ENCODE measurements at regions of chr10 and their contacts with region 1.

Region 1: DNA sequence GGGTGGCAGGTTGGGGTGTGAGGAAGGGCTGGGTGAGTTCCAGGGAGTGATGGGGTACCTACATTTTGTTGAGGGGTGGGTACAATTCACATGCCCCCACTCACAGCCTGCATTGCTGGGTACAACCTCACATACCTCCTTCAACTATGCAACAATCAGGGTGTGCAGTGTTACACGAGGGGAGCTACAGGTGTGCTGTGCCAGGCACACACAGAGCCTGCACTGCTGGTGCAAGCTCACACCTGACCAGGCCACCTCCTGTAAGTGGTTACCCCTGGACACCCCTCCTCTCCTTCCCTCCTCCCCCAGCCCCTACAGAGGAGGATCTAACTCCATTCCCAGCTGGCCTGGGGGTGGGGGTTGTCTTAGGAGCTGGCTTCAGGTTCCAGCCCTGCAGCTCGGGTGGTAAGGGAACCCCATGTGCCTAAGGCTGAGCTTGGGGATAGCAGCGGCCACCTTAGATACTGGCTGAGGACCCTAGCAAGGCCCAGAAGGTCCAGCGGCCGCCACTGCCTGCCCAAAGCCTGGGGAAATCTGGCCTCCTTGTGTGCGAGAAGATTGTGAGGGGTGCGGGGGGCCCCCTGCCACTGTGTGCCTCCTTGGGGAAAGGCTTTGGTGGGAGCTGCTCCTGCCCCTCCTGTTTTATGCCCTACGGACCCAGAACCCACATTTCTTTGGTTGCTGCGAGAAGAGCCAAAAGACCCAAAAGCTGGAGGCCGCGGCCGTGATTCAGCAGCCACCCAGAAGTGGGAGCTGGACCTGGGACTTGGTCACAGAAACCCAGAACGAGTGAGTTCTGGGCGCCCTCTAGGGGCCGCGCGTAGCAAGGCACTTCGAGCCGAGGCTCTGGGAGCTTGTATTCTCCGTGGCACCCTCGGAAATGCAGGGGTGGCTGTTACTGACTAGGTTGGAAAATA is 10.8 kb downstream of the TLX1 start:
- DNase-seq: peak; percentile 79
- H3K4me3 Mint-ChIP-seq: no peak overlapping the region
- H3K27ac Mint-ChIP-seq: no peak overlapping the region
- H3K4me1 Mint-ChIP-seq: peaks cover 13% of the 10 kb centered on the region
- H3K27me3 Mint-ChIP-seq: peaks cover 95% of the 10 kb centered on the region

Region 2: GRCh38 chr10:100890673-100891317 is 251.1 kb before region 1 on chr10:
- CTCF ChIA-PET with region 1: no interaction called
- POLR2A ChIA-PET with region 1: no interaction called
- DNase-seq: peak; percentile 3
- H3K4me3 Mint-ChIP-seq: no peak overlapping the region
- H3K27ac Mint-ChIP-seq: no peak overlapping the region
- H3K4me1 Mint-ChIP-seq: no peaks in the 10 kb centered on the region
- H3K27me3 Mint-ChIP-seq: peaks cover 40% of the 10 kb centered on the region

Region 3: DNA sequence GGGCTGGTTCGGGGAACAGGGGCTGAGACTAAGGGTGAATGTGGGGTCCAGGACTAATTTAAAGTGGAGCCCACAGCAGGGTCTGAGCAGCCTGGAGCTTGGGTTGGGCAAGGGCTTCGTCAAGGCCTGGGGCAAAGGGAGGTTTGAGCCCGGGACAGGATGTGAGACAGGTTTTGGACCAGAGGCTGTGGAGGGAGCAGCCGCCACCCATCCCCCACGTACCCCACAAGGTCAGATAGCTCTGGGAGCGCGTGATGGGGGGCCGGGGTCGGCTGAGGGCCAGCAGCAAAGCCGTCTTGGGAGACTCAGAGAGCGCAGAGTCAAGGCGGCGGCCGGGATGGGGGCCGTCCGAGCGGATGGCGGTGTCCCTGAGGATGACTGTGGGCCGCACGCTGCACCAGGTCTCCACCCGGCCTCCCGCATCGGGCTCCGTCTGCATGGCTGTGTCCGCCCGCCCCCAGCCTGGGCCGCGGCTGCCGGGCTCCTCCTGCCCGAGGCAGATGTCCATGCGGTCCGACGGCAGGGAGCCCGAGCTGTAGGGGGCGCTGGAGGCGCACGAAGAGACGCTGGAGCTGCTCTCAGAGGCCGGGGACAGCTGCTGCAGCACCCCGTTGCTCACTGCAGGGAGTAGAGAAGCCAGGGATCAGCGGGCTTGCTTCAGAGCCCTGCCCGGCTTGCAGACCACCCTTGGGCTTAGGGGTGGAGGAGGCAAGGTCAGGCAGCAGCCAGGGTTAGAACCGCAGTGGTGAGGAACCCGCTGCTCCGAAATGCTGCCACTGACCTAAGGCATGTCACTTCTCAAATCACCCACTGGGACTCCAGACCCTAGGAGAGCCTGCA is 123.1 kb before region 1 on chr10:
- CTCF ChIA-PET with region 1: interaction called, 15 read pairs
- POLR2A ChIA-PET with region 1: no interaction called
- DNase-seq: peak; percentile 84
- H3K4me3 Mint-ChIP-seq: no peak overlapping the region
- H3K27ac Mint-ChIP-seq: no peak overlapping the region
- H3K4me1 Mint-ChIP-seq: peaks cover 13% of the 10 kb centered on the region
- H3K27me3 Mint-ChIP-seq: peaks cover 37% of the 10 kb centered on the region

Region 4: DNA sequence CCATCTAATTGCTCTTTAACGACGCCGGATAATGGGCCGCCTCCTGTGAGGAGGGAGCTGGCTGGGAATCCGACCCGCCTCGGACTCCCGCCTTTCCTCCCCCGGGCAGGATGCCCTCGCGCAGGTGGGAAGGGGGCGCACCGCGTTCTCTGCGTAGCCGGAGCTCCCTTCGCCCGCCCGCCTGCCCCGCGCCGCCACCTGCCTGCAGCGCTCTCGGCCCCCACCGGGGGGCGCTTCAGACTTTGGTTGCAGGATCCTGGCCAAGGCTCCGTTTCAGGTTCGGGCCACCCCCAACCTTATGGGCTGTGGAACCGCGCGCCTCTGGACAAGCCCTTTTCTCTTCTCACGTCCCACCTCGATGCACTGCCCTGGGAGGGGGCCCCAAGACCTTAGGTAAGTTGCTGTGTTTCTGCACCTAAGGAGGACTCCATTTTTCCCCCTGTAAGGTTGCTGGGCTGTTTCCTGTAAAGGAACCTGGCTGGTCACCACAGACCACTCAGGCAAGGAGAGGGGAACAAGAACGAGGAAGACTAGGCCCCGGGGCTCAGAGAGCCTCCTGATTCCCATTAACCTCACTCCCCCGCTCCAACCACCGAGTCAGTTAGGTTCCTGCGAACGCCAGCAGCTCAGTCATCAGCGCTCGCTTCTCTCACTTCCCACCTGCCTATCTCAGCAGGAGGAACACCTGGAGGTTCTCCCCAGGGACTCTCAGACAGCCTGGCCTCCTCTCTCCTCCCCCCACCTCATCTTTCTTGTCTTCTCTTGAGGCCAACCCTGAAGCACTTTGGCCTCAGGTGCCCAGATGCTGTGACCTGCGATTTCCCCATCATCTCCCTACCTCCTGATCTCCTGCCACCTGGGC is 91.4 kb before region 1 on chr10:
- CTCF ChIA-PET with region 1: interaction called, 37 read pairs
- POLR2A ChIA-PET with region 1: no interaction called
- DNase-seq: peak; percentile 83
- H3K4me3 Mint-ChIP-seq: no peak overlapping the region
- H3K27ac Mint-ChIP-seq: no peak overlapping the region
- H3K4me1 Mint-ChIP-seq: peaks cover 32% of the 10 kb centered on the region
- H3K27me3 Mint-ChIP-seq: peaks cover 41% of the 10 kb centered on the region

Region 5: GRCh38 chr10:101067356-101068083 is 74.4 kb before region 1 on chr10:
- CTCF ChIA-PET with region 1: interaction called, 10 read pairs
- POLR2A ChIA-PET with region 1: no interaction called
- DNase-seq: peak; percentile 82
- H3K4me3 Mint-ChIP-seq: peak overlapping the region; percentile 77
- H3K27ac Mint-ChIP-seq: no peak overlapping the region
- H3K4me1 Mint-ChIP-seq: peaks cover 24% of the 10 kb centered on the region
- H3K27me3 Mint-ChIP-seq: peaks cover 51% of the 10 kb centered on the region

Region 6: DNA sequence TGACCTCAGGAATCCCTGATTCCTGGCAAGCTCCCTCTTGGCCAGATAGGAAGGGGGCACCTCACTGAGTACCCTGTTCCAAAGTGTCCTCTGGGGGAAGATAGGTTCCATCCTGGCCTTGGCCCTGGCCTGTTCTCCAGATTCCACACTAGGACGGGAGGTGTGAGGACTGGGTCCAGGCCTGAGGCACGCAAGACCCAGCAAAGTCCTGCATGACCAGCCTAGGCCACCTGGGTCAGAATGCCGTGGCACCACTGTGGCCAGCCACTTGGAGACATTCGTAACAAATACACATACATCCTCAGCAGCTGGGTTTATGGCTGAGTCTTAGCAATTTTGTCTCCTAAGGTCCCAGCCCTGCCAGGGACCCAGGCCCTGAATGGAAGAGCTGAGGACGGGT is 34.1 kb before region 1 on chr10:
- CTCF ChIA-PET with region 1: interaction called, 307 read pairs
- POLR2A ChIA-PET with region 1: no interaction called
- DNase-seq: no peak
- H3K4me3 Mint-ChIP-seq: no peak overlapping the region
- H3K27ac Mint-ChIP-seq: no peak overlapping the region
- H3K4me1 Mint-ChIP-seq: no peaks in the 10 kb centered on the region
- H3K27me3 Mint-ChIP-seq: peaks cover 33% of the 10 kb centered on the region

Region 7: DNA sequence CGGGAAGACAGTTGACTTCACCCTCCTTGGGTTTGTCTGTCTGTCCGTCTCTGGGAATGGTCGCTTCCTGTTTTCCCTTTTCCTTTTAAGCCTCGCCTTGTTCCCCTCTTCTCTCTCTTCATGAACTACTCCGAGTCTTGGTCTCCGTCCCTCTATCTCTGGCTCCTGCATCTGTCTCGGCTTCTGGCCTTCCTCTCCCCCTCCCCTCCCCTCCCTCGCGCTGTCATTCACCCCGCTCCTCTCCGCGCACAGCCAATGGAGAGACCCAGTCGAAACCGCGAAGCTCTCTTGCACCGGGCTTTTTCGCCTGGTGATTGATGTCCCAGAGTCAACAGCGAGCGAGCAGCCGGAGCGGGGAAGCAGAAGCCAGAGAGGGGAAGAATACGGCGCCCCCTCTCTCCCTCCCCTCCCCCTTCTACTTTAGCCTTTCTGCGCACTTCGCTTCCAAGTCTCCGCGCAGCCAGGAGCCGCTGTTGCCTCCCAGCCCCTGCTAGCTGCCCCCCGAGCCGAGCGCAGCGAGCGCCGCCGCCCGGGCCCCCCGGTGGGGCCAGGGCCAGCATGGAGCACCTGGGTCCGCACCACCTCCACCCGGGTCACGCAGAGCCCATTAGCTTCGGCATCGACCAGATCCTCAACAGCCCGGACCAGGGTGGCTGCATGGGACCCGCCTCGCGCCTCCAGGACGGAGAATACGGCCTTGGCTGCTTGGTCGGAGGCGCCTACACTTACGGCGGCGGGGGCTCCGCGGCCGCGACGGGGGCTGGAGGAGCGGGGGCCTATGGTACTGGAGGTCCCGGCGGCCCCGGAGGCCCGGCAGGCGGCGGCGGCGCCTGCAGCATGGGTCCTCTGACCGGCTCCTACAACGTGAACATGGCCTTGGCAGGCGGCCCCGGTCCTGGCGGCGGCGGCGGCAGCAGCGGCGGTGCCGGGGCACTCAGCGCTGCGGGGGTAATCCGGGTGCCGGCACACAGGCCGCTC is 10.6 kb before region 1 on chr10 and contains the start of gene TLX1:
- CTCF ChIA-PET with region 1: interaction called, 23 read pairs
- POLR2A ChIA-PET with region 1: no interaction called
- DNase-seq: no peak
- H3K4me3 Mint-ChIP-seq: no peak within 1 kb of the TSS
- H3K27ac Mint-ChIP-seq: no peak within 1 kb of the TSS
- H3K4me1 Mint-ChIP-seq: peaks cover 22% of the 10 kb centered on the region
- H3K27me3 Mint-ChIP-seq: peaks cover 88% of the 10 kb centered on the region
- total RNA-seq, gene TLX1: not detected

Region 8: DNA sequence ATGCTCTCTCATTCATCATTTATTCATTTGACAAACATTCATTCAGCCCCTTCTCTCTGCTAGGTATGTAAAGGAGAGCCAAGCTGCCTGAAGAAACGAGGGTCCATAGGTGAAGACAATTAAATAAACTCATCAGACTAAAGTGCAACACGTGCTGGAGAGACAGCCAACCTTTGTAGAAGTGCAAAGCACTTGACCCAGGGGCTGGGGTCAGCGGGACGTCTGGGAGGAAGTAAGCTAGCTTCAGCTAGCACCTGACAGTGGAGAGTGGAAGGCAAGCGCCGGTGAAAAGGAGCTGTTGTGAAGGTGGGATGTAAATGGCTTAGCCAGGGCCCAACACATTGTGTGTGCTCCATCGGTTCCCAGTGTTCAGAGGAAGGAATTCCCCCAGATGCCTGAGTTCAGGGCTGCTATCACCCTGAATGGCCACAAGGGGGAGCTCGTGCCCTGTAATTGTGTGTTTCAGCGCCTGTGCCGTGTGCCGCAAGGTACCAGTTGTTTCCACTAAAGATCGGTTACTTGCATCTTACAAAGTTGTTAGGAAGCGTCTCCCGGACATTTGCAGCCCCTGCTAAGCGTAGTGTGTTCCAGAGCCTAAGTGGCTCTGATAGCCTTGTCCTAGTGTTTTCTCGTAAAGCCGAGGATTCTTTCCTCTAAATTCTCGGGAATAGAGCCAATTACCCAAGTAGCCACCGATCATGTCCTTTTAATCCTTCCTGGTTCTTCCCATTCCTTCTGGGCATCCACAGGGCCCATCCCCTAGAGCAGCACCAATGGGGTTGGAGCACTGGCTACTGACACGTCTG is 19.8 kb after region 1 on chr10:
- CTCF ChIA-PET with region 1: interaction called, 19 read pairs
- POLR2A ChIA-PET with region 1: no interaction called
- DNase-seq: peak; percentile 70
- H3K4me3 Mint-ChIP-seq: no peak overlapping the region
- H3K27ac Mint-ChIP-seq: no peak overlapping the region
- H3K4me1 Mint-ChIP-seq: peaks cover 15% of the 10 kb centered on the region
- H3K27me3 Mint-ChIP-seq: peaks cover 67% of the 10 kb centered on the region